Common myeloid progenitor, CD34-positive (primary cell): ENCODE measurements at regions of chr6 and their contacts with region 1.

Region 1: GRCh38 chr6:29847871-29848630 is 20.4 kb downstream of the HLA-G start:
- DNase-seq: peak; percentile 70 to 82 (median 74)
- H3K4me3 ChIP-seq: no peak overlapping the region
- H3K27ac ChIP-seq: no peak overlapping the region
- H3K4me1 ChIP-seq: peaks cover 0 to 7% (median 3%) of the 10 kb centered on the region in 4 experiments
- H3K27me3 ChIP-seq: peaks cover 6 to 69% (median 15%) of the 10 kb centered on the region in 5 experiments

Region 2: DNA sequence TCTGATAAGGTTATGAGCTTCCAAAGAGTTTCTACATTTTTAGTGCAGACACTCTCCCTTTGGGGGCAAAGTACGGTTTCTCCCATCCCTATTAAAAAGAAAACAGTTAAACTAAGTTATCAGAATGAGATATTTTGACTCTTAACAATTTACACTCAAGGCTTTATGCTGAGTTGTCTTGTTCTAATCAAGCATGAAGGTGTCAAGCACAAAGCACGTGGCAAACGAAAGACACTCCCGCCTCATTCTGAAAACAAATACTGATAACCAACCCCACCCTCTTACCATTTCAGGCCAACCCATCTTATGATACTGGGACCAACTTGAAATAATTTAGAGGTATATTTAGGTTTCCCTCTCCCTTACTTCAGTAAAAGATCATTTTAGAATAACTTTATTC is 522.3 kb before region 1 on chr6:
- CTCF ChIA-PET with region 1: no interaction called
- POLR2A ChIA-PET with region 1: no interaction called
- DNase-seq: no peak
- H3K4me3 ChIP-seq: no peak overlapping the region
- H3K27ac ChIP-seq: no peak overlapping the region
- H3K4me1 ChIP-seq: no peaks in the 10 kb centered on the region
- H3K27me3 ChIP-seq: peaks cover 0 to 6% (median 4%) of the 10 kb centered on the region in 5 experiments

Region 3: GRCh38 chr6:29723262-29723665 is 124.8 kb before region 1 on chr6 and contains the start of gene HLA-F:
- CTCF ChIA-PET with region 1: no interaction called
- POLR2A ChIA-PET with region 1: no interaction called
- DNase-seq: peak; percentile 77 to 87 (median 81)
- H3K4me3 ChIP-seq: peak within 1 kb of the TSS; percentile 57 to 99 (median 87)
- H3K27ac ChIP-seq: peak within 1 kb of the TSS; percentile 58 to 84
- H3K4me1 ChIP-seq: peaks cover 0 to 17% (median 9%) of the 10 kb centered on the region in 4 experiments
- H3K27me3 ChIP-seq: peaks cover 0 to 3% (median 0%) of the 10 kb centered on the region in 5 experiments

Region 4: GRCh38 chr6:29827579-29828470 is 20.2 kb before region 1 on chr6 and contains the start of gene HLA-G:
- CTCF ChIA-PET with region 1: no interaction called
- POLR2A ChIA-PET with region 1: no interaction called
- DNase-seq: peak in 1 of 3 donors; percentile 17
- H3K4me3 ChIP-seq: peak within 1 kb of the TSS in 5 of 7 experiments; percentile 23 to 64 (median 54)
- H3K27ac ChIP-seq: no peak within 1 kb of the TSS
- H3K4me1 ChIP-seq: peaks cover 0 to 14% (median 5%) of the 10 kb centered on the region in 4 experiments
- H3K27me3 ChIP-seq: peaks cover 0 to 67% (median 28%) of the 10 kb centered on the region in 5 experiments

Region 5: DNA sequence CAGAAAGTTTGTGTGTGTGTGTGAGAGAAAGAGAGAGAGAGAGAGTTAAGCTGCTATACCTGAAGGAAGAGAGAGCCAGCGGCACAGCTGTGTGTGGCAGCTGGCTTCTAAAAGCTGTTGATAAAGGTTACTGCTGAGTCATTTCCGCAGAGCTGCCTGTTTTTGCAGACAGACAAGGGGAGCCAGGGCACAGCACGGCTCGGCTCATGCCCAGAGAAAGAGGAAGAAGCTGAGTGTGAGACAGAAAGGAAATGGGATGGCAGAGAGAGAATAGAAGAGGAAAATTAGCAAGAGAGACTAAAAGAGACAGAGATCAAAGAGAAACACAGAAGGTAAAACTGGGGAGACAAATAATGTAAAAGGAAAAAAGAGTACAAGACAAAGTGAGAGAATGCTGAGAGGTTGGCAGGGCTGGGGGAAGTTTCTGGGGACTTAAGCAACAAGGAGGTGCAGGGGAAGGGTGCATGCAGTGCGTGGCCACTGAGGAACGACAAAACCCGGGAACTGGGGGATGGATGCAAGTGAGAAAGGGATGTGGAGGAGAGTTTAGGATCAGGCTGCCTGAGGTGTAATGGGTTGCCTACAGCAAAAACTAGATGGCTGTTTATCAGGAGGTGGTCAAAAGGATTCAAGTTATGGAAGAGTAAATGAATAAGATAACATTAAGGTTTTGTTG is 117.0 kb after region 1 on chr6:
- CTCF ChIA-PET with region 1: interaction called, 28 read pairs
- POLR2A ChIA-PET with region 1: no interaction called
- DNase-seq: peak; percentile 99 to 100 (median 99)
- H3K4me3 ChIP-seq: peak overlapping the region in 6 of 7 experiments; percentile 38 to 72 (median 69)
- H3K27ac ChIP-seq: peak overlapping the region; percentile 66 to 92
- H3K4me1 ChIP-seq: peaks cover 12 to 42% (median 32%) of the 10 kb centered on the region in 4 experiments
- H3K27me3 ChIP-seq: no peaks in the 10 kb centered on the region

Region 6: GRCh38 chr6:30013291-30013922 is 165.4 kb after region 1 on chr6:
- CTCF ChIA-PET with region 1: interaction called, 52 read pairs
- POLR2A ChIA-PET with region 1: no interaction called
- DNase-seq: peak; percentile 37 to 63 (median 44)
- H3K4me3 ChIP-seq: no peak overlapping the region
- H3K27ac ChIP-seq: no peak overlapping the region
- H3K4me1 ChIP-seq: no peaks in the 10 kb centered on the region
- H3K27me3 ChIP-seq: peaks cover 0 to 13% (median 2%) of the 10 kb centered on the region in 5 experiments